CD8-positive, alpha-beta memory T cell (primary cell): ENCODE measurements at regions of chr1 and their contacts with region 1.

Region 1: DNA sequence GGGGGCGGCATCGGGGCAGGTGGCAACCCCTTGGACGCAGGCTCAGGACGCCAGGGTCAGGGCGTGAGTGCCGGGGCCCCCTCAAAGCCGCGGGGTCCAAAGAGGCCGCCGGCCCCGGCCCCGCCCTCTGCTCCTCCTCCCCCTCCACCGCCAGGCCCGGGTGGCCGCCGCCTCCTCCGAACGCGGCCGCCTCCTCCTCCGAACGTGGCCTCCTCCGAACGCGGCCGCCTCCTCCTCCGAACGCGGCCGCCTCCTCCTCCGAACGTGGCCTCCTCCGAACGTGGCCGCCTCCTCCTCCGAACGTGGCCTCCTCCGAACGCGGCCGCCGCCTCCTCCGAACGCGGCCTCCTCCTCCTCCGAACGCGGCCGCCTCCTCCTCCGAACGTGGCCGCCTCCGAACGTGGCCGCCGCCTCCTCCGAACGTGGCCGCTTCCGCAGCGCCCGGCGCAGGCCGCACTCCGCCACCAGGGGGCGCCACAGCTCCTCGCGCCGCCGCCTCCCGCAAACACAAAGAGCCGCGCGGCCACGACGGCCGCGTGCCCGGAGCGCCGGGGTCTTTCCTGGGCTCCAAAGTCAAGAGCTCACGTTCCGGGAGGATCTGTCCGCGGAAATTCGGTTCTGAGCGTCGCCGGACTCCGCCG is 19.3 kb upstream of the SAMD11 start:
- DNase-seq: peak; percentile 72 to 87 (median 83)
- H3K4me3 ChIP-seq: no peak overlapping the region
- H3K4me3 Mint-ChIP-seq: peak overlapping the region; percentile 23 to 76 (median 70)
- H3K27ac ChIP-seq: no peak overlapping the region
- H3K27ac Mint-ChIP-seq: peak overlapping the region in 1 of 8 donors; percentile 15
- H3K4me1 ChIP-seq: no peaks in the 10 kb centered on the region
- H3K4me1 Mint-ChIP-seq: peaks cover 5 to 19% (median 9%) of the 10 kb centered on the region in 3 donors
- H3K27me3 ChIP-seq: peaks cover 10% of the 10 kb centered on the region
- H3K27me3 Mint-ChIP-seq: peaks cover 25 to 47% of the 10 kb centered on the region in 2 donors

Region 2: GRCh38 chr1:975896-976683 is 71.7 kb after region 1 on chr1:
- CTCF ChIA-PET with region 1: interaction called, 13 read pairs
- POLR2A ChIA-PET with region 1: no interaction called
- DNase-seq: peak in 4 of 5 donors; percentile 46 to 62 (median 52)
- H3K4me3 ChIP-seq: peak overlapping the region; percentile 43
- H3K4me3 Mint-ChIP-seq: peak overlapping the region in 4 of 7 donors; percentile 6 to 60 (median 48)
- H3K27ac ChIP-seq: no peak overlapping the region
- H3K27ac Mint-ChIP-seq: peak overlapping the region in 2 of 8 donors; percentile 22 to 87
- H3K4me1 ChIP-seq: peaks cover 4% of the 10 kb centered on the region
- H3K4me1 Mint-ChIP-seq: peaks cover 0 to 10% (median 6%) of the 10 kb centered on the region in 3 donors
- H3K27me3 ChIP-seq: peaks cover 6% of the 10 kb centered on the region
- H3K27me3 Mint-ChIP-seq: peaks cover 7 to 22% of the 10 kb centered on the region in 2 donors